Common myeloid progenitor, CD34-positive (primary cell): ENCODE measurements at regions of chr18 and their contacts with region 1.

Region 1: DNA sequence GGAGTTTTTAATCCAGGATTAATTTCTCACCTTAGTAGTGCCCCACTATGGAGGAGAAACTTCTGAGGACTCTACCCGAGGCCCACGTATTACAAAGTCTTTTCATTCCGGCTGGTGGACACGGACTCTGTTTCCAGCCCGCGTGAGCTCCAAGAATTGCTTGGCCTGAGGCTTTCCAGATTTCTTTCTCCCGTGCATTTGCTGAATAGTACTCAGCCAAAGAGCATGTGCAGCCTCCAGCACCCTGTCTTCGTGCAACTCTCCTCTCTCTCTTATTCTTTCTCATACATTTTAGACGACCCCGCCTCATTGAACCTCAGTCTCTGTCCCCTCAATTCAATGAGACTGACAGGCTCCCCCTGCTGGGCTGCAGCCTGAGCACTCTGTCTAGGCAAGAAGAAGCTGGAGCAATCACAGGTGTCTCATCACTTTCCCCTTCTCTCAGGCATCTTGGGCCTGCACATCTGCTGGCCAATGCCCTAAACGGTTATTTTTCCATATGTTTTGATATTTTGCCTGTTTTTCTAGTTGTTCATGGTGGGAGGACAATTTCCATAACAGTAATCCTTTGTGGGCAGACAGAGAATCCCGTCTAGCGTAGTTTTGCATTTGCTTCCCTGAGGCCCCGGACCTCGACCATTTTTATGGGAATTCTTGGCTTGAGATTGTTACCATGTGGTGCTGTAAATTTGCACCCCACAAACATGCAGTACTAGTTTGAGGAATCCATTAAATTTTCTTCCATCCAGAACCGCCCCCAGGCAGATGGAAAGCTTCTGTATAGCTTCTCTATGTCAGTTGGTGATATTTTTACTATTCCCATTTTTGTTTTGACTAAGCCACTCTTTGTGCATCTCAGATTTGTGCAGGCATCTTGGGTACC is 50.1 kb upstream of the LPIN2 start:
- DNase-seq: peak; percentile 58 to 66 (median 64)
- H3K4me3 ChIP-seq: peak overlapping the region in 2 of 7 experiments; percentile 2 to 43
- H3K27ac ChIP-seq: no peak overlapping the region
- H3K4me1 ChIP-seq: peaks cover 16 to 49% (median 39%) of the 10 kb centered on the region in 4 experiments
- H3K27me3 ChIP-seq: no peaks in the 10 kb centered on the region

Region 2: DNA sequence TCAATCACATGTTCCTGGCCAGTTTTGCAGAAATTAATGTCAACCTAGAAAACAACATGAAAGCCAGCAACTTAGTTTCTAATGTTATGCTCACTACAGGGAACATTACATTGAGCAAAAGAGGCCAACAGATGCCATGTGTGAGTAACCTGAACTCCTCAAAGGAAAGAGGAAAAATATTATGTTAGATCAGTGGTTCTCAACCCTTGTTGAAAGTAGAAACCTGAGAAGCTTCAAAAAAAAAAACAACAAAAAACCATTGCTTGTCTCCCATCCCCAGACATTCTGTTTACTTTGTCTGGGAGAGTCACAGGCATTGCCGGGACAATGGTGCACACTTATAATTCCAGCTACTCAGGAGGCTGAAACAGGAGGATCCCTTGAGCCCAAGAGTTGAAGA is 549.4 kb before region 1 on chr18:
- CTCF ChIA-PET with region 1: no interaction called
- POLR2A ChIA-PET with region 1: no interaction called
- DNase-seq: no peak
- H3K4me3 ChIP-seq: no peak overlapping the region
- H3K27ac ChIP-seq: no peak overlapping the region
- H3K4me1 ChIP-seq: peaks cover 0 to 10% (median under 1%) of the 10 kb centered on the region in 4 experiments
- H3K27me3 ChIP-seq: no peaks in the 10 kb centered on the region

Region 3: DNA sequence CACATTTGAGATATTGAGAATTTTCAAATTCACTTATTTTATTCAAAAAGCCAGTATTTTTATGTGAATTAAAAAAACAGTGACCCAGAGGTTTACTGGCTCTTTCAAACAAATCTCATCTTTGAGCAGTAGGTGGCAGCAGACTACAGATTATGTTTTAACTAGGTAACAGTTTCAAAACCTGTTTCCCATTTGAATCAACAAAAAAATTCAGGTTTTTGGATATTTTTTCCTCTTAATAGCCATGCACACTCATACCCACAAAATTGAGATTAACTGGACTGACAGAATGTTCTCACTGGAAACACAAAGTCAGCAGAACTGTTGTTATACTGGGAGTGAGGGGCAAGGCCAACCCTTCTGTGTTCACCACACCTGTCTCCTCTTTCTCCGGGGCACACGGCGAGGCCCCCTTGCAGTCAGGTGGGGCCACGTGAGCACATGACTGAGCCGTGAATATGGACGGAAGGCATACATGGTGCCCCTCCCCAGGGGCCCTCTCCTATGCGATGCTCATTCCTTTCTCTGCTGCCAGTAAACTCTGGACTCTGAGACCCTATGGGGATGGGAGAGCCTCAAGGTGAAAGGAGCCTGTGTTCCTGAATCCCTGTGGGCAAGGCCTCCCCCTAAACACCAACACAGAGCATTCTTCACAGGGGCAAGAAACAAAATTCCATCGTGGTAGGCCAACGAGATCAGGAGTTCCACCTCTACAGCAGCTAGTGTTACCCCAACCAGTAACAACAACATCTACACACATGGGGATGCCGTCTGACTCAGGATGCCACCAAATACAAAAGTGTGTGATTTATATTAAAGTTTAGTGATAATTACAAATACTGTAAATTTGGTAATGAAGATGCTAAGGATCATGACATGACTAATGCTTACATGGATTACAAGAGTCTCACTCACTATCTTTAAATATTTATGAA is 130.5 kb before region 1 on chr18:
- CTCF ChIA-PET with region 1: interaction called, 15 read pairs
- POLR2A ChIA-PET with region 1: interaction called, 3 read pairs
- DNase-seq: peak; percentile 68 to 88 (median 79)
- H3K4me3 ChIP-seq: no peak overlapping the region
- H3K27ac ChIP-seq: no peak overlapping the region
- H3K4me1 ChIP-seq: peaks cover 0 to 7% (median 0%) of the 10 kb centered on the region in 4 experiments
- H3K27me3 ChIP-seq: no peaks in the 10 kb centered on the region

Region 4: GRCh38 chr18:3008541-3008940 is 54.5 kb before region 1 on chr18:
- CTCF ChIA-PET with region 1: interaction called, 17 read pairs
- POLR2A ChIA-PET with region 1: no interaction called
- DNase-seq: peak in 2 of 3 donors; percentile 58 to 59
- H3K4me3 ChIP-seq: no peak overlapping the region
- H3K27ac ChIP-seq: no peak overlapping the region
- H3K4me1 ChIP-seq: peaks cover 8 to 41% (median 29%) of the 10 kb centered on the region in 4 experiments
- H3K27me3 ChIP-seq: no peaks in the 10 kb centered on the region

Region 5: GRCh38 chr18:3074087-3074486 is 11.0 kb after region 1 on chr18:
- CTCF ChIA-PET with region 1: interaction called, 21 read pairs
- POLR2A ChIA-PET with region 1: no interaction called
- DNase-seq: no peak
- H3K4me3 ChIP-seq: no peak overlapping the region
- H3K27ac ChIP-seq: no peak overlapping the region
- H3K4me1 ChIP-seq: peaks cover 0 to 4% (median 0%) of the 10 kb centered on the region in 4 experiments
- H3K27me3 ChIP-seq: no peaks in the 10 kb centered on the region

Region 6: DNA sequence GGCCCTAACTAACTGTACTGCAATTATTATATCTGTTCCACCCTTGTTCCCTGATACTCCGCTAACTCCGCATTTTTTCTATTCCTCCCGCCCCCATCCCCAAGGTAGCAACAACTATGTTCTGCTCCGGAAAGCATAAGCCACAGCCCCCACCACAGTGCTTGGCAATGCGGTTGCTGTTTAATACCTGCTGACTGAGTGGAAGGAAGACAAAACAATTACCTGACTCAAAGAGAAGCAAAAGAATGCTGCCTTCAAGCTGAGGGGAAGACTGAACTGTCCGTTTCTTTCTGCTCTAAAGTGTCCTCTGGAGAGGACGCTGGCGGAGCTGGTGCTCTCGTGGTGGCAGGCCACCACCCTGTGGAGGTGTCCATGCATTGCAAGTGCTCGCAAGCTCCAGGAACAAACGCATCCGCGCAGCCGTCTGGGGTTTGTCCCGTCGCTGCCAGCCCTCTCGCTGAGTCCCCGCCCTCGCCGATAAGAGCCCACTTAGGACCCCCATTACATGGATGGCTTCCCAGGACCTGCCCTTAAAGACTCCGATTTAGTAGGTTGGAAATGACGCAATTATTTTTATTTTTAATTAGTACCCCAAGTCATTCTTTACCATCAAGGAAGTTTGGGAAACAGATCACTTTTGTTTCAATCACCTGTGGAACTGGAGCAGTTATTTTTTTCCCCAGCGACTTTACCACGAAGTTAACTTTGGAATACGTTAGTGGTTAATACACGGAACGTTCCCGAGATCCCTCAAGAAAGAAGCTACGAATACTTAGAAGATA is 183.0 kb after region 1 on chr18:
- CTCF ChIA-PET with region 1: interaction called, 16 read pairs
- POLR2A ChIA-PET with region 1: interaction called, 6 read pairs
- DNase-seq: peak; percentile 90 to 95 (median 94)
- H3K4me3 ChIP-seq: peak overlapping the region; percentile 80 to 99 (median 93)
- H3K27ac ChIP-seq: peak overlapping the region; percentile 95 to 98
- H3K4me1 ChIP-seq: peaks cover 23 to 46% (median 37%) of the 10 kb centered on the region in 4 experiments
- H3K27me3 ChIP-seq: no peaks in the 10 kb centered on the region